OCI-LY7 (cell line): ENCODE measurements at regions of chr20 and their contacts with region 1.

Region 1: DNA sequence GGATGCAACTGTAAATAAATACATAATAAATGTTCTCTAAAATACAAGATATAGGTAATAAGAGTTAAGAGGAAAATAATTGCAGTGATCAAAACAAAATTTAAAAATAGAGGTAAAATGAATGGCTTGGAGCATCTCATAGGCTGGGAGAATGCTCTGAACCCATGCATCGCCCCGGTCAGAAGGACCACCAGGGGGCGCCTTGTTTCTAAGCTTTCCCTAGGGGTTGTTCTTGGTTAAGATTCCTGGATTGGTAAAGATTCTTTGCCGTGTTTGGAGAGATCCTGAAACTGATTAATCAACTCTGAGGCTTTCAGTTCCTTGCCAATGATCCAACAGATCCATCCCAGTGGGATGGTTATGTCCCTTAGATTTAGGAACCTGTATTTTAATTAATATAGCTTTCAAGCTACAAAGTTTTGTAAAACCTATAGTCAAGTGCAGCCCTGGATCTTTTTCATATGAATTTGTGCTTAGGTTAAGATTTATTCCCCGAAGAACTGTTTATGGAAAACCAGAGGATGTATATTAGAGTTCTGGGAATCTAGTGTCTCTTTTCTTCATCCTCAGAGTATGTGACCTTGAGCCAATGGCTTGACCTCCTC is 45.3 kb upstream of the PRELID3B start:
- DNase-seq: peak; percentile 79
- H3K4me3 ChIP-seq: no peak overlapping the region
- H3K27ac ChIP-seq: no peak overlapping the region
- H3K4me1 ChIP-seq: no peaks in the 10 kb centered on the region
- CTCF ChIP-seq: peak; percentile 99

Region 2: DNA sequence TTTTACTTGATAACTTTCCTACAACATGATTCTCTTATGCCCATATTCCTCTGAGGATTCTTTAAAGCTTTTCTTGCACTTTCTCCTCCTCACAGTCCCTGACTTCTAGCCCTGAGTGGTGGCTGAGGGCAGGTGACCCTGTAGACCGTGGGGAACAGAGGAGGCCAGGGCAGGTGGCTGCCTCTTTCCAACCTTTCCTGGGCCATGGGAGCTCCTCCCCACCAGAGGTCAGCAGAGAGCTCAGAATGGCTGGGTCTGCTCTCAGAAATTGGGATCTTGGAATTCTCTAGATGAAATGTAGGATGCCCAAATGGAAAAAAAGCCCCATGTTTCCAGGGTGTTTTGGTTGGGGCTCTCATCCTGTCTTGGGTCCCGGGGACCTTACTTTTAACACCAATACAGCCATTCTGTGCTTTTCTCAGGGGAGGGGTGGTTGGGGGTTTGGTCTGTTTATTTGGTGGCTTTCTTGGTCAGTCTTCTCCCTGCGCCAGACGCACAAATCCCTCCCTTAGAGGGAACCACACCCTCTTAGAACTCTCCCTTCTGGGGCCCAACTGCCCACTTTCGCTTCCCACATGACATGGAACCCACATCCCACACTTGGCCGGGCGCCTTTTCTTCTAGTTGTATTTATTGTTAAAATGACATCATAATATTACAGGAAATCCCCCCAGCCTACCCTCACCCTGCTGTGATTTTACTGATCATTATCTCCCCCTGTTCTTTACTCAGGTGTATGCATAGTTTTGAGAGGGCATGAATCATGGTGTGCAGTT is 217.5 kb before region 1 on chr20:
- CTCF ChIA-PET with region 1: no interaction called
- POLR2A ChIA-PET with region 1: no interaction called
- intact Hi-C with region 1: loop called (anchors 5 kb)
- DNase-seq: peak; percentile 65
- H3K4me3 ChIP-seq: no peak overlapping the region
- H3K27ac ChIP-seq: no peak overlapping the region
- H3K4me1 ChIP-seq: peaks cover 16% of the 10 kb centered on the region
- CTCF ChIP-seq: peak; percentile 95

Region 3: GRCh38 chr20:59207742-59208357 is 119.9 kb after region 1 on chr20:
- CTCF ChIA-PET with region 1: interaction called, 5 read pairs
- POLR2A ChIA-PET with region 1: no interaction called
- intact Hi-C with region 1: loop called (anchors 1 kb)
- DNase-seq: peak; percentile 86
- H3K4me3 ChIP-seq: no peak overlapping the region
- H3K27ac ChIP-seq: no peak overlapping the region
- H3K4me1 ChIP-seq: peaks cover 4% of the 10 kb centered on the region
- CTCF ChIP-seq: peak; percentile 95

Region 4: DNA sequence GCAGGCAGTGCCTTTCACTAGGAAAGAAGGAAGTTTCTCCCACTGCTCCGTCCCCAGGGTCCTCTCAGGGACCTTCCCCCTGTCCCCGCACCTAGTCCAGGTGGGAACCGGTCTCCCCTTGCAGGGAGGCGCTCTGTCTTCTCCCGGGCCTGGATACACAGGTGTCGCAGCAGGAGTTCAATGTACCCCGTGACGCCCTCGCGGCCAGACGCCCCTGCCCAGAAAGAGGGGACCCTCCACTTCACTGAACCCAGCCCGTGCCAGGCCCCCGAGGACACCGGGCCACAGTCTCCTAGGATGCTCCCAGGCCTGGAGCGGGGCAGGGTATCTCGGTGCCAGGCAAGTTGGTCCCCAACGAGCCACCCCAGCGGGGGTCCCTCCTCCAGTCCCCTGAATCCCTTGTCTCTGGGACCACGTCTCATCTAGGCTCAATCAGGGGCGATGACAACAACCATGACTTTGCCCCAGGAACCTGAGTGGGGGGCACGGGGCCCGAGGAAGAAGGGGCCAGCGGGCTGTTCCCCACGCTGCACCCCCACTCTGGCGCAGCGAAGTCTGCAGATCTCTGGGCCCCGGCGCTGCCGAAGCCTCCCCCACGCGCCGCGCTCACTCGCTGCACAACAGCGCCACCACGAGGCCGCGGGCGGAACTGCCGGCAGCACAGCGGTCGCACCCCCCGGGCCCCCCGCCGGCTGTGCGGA is 315.5 kb after region 1 on chr20:
- CTCF ChIA-PET with region 1: no interaction called
- POLR2A ChIA-PET with region 1: no interaction called
- intact Hi-C with region 1: loop called (anchors 2 kb)
- DNase-seq: peak; percentile 39
- H3K4me3 ChIP-seq: no peak overlapping the region
- H3K27ac ChIP-seq: no peak overlapping the region
- H3K4me1 ChIP-seq: no peaks in the 10 kb centered on the region
- CTCF ChIP-seq: peak; percentile 95